ENCODE measurements at regions of chr5 and their contacts with region 1.

Region 1: DNA sequence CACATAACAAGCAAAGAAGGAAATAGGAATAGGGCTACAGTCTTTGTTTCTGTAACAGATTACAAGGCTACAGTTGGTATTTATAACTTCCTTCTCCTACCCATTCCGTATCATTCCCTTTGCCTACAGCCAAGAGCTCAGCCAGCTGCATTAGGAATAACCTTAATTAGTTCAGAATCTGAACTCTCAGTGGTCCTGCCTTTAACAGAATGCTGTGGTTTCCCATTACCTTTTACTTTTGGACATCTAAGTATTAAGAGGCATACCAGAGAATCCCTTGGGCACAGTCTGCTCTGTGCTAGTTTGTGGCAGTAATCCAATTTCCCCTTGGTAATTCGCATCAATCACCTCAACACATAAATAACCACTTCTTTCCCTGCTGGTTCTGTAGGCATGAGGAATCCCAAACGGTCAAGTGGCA is 44.2 kb downstream of the PKD2L2 start:
- DNase-seq: no peak
- ATAC-seq: peak; percentile 34 to 47
- H3K4me3 ChIP-seq: no peak overlapping the region
- H3K27ac ChIP-seq: peak overlapping the region; percentile 62
- H3K4me1 ChIP-seq: no peaks in the 10 kb centered on the region
- H3K27me3 ChIP-seq: no peaks in the 10 kb centered on the region

Region 2: GRCh38 chr5:137667341-137667740 is 266.2 kb before region 1 on chr5:
- intact Hi-C with region 1: no loop called
- DNase-seq: no peak
- ATAC-seq: no peak
- H3K4me3 ChIP-seq: no peak overlapping the region
- H3K27ac ChIP-seq: peak overlapping the region; percentile 30
- H3K4me1 ChIP-seq: peaks cover 9% of the 10 kb centered on the region
- H3K27me3 ChIP-seq: no peaks in the 10 kb centered on the region

Region 3: DNA sequence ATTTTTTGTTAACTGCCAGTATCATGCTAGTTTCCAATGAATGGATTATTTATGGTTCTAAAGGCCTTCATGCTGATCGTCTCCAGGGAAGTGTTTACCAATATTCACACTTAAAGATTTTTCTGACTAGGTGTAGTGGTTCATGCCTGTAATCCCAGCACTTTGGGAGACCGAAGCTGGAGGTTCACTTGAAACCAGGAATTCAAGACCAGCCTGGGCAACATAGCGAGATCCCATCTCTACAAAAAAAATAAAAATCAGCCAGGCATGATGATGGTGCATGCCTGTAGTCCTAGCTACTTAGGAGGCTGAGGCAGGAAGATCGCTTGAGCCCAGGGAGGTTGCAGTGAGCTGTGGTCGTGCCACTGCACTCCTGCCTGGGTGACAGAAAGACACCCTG is 55.9 kb after region 1 on chr5:
- intact Hi-C with region 1: loop called in 1 of 4 experiments (anchors 10 kb)
- DNase-seq: no peak
- ATAC-seq: no peak
- H3K4me3 ChIP-seq: no peak overlapping the region
- H3K27ac ChIP-seq: no peak overlapping the region
- H3K4me1 ChIP-seq: no peaks in the 10 kb centered on the region
- H3K27me3 ChIP-seq: no peaks in the 10 kb centered on the region

Measured in right cardiac atrium (tissue), 5 donors.